ENCODE measurements at regions of chr6 and their contacts with region 1.

Region 1: GRCh38 chr6:42928986-42929820 is at the start of gene CNPY3:
- DNase-seq: peak; percentile 96
- ATAC-seq: peak; percentile 88
- H3K4me3 Mint-ChIP-seq: peak within 1 kb of the TSS; percentile 99
- H3K27ac Mint-ChIP-seq: peak within 1 kb of the TSS; percentile 100
- H3K4me1 Mint-ChIP-seq: peaks cover 39% of the 10 kb centered on the region
- H3K27me3 Mint-ChIP-seq: no peaks in the 10 kb centered on the region
- CTCF ChIP-seq: no peak
- total RNA-seq, gene CNPY3: 67.0 to 88.7 TPM (median 86.5 TPM) in 3 replicates

Region 2: DNA sequence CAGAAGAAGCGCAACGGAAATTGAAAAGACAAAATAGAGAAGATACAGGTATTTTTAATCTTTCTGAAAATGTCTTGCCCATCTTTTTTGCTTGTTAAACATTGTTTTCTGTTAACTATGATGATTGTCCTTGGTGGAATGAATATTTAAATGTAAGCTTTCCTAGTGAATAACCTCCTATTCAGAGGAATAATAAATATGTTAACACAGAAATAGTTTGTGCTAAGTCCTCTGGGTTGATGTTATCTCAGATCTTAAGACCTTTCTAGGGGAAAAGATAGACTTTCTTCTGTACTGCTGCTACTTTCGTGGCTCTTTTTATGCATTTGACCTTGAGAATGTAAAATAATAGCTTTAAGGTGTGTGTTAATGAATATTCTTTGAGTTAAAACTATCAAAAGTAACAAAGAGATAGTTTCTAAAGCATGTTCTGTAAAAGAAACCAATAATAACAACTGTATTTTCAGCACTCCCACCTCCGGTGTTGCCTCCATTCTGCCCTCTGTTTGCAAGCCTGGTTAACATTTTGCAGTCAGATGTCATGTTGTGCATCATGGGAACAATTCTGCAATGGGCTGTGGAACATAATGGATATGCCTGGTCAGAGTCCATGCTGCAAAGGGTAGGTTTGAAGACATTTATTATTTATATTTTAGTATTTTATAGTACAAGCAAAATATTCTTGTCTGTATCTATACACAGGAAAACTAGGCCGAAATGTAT is 277.0 kb before region 1 on chr6:
- CTCF ChIA-PET with region 1: no interaction called
- POLR2A ChIA-PET with region 1: no interaction called
- DNase-seq: no peak
- ATAC-seq: no peak
- H3K4me3 Mint-ChIP-seq: no peak overlapping the region
- H3K27ac Mint-ChIP-seq: no peak overlapping the region
- H3K4me1 Mint-ChIP-seq: no peaks in the 10 kb centered on the region
- H3K27me3 Mint-ChIP-seq: no peaks in the 10 kb centered on the region
- CTCF ChIP-seq: no peak

Region 3: GRCh38 chr6:42911171-42912021 is 17.8 kb before region 1 on chr6:
- CTCF ChIA-PET with region 1: interaction called, 28 read pairs
- POLR2A ChIA-PET with region 1: interaction called, 35 read pairs
- DNase-seq: peak; percentile 85
- ATAC-seq: peak; percentile 81
- H3K4me3 Mint-ChIP-seq: peak overlapping the region; percentile 87
- H3K27ac Mint-ChIP-seq: peak overlapping the region; percentile 98
- H3K4me1 Mint-ChIP-seq: peaks cover 5% of the 10 kb centered on the region
- H3K27me3 Mint-ChIP-seq: no peaks in the 10 kb centered on the region; the same call in 1 of the 2 replicates
- CTCF ChIP-seq: no peak

Region 4: DNA sequence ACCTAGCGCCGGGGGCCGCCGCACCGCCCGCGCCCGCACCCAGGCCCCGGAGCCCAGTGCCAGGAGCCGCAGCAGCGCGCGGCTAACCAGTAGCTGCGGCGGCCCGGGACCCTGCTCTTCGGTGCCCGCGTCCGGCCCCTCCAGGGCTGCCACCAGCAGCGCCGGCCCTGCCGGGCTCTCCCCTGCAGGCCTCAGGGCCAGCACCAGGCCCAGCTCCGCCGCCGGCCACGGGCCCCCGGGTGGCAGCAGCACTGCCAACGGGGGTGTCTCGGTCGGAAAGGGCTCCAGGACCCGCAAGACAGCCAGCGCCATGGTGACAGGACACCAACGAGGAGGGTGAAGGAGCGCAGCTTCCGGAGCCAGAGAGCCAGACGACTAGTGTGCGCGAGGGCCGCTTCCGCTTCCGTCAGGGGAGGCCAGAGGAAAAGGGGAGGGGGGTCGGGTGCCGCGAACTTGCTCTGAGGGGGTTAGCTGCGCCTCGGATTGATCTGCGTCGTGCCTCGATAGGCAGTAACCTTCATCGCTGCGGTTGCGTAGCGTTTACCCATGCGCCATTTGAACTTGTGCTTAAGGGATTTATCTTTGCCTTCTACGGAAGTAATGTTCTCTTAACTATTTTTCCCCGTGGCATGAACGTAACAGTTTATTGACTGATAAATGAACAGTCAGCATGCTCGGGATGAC is 49.8 kb after region 1 on chr6 and contains the start of gene PEX6:
- CTCF ChIA-PET with region 1: interaction called, 10 read pairs
- POLR2A ChIA-PET with region 1: interaction called, 12 read pairs
- DNase-seq: peak; percentile 86
- ATAC-seq: peak; percentile 88
- H3K4me3 Mint-ChIP-seq: peak within 1 kb of the TSS; percentile 91
- H3K27ac Mint-ChIP-seq: peak within 1 kb of the TSS; percentile 98
- H3K4me1 Mint-ChIP-seq: peaks cover 21% of the 10 kb centered on the region
- H3K27me3 Mint-ChIP-seq: no peaks in the 10 kb centered on the region
- CTCF ChIP-seq: no peak
- total RNA-seq, gene PEX6: 8.2 to 12.6 TPM (median 11.7 TPM) in 3 replicates

Region 5: GRCh38 chr6:42984001-42984923 is 55.1 kb after region 1 on chr6 and contains the start of gene PPP2R5D:
- CTCF ChIA-PET with region 1: interaction called, 10 read pairs
- POLR2A ChIA-PET with region 1: interaction called, 12 read pairs
- DNase-seq: peak; percentile 98
- ATAC-seq: peak; percentile 97
- H3K4me3 Mint-ChIP-seq: peak within 1 kb of the TSS; percentile 79
- H3K27ac Mint-ChIP-seq: peak within 1 kb of the TSS; percentile 80
- H3K4me1 Mint-ChIP-seq: peaks cover 27% of the 10 kb centered on the region
- H3K27me3 Mint-ChIP-seq: no peaks in the 10 kb centered on the region
- CTCF ChIP-seq: no peak
- total RNA-seq, gene PPP2R5D: 47.5 to 52.7 TPM (median 49.0 TPM) in 3 replicates

Region 6: GRCh38 chr6:43174263-43175112 is 245.3 kb after region 1 on chr6:
- CTCF ChIA-PET with region 1: interaction called, 4 read pairs
- POLR2A ChIA-PET with region 1: interaction called, 13 read pairs
- DNase-seq: peak; percentile 97
- ATAC-seq: peak; percentile 70
- H3K4me3 Mint-ChIP-seq: peak overlapping the region; percentile 94
- H3K27ac Mint-ChIP-seq: peak overlapping the region; percentile 86
- H3K4me1 Mint-ChIP-seq: peaks cover 31% of the 10 kb centered on the region
- H3K27me3 Mint-ChIP-seq: peaks cover 10% of the 10 kb centered on the region
- CTCF ChIP-seq: no peak

Measured in WTC11 (cell line).